ENCODE measurements at regions of chr7 and their contacts with region 1.

Region 1: GRCh38 chr7:101138213-101138870 is 11.4 kb downstream of the SERPINE1 start:
- DNase-seq: peak; percentile 96
- H3K4me3 ChIP-seq: peak overlapping the region in 3 of 4 donors; percentile 22 to 33 (median 26)
- H3K27ac ChIP-seq: peak overlapping the region; percentile 42 to 62 (median 50)
- H3K4me1 ChIP-seq: peaks cover 7 to 14% (median 13%) of the 10 kb centered on the region in 4 donors
- H3K27me3 ChIP-seq: peaks cover 0 to 10% (median 0%) of the 10 kb centered on the region in 4 donors
- CTCF ChIP-seq: peak; percentile 81 to 88 (median 86)
- EP300 ChIP-seq: no peak
- POLR2A ChIP-seq: no peak

Region 2: GRCh38 chr7:101094416-101095375 is 43.6 kb before region 1 on chr7:
- intact Hi-C with region 1: loop called (anchors 1 kb)
- DNase-seq: no peak
- H3K4me3 ChIP-seq: no peak overlapping the region
- H3K27ac ChIP-seq: no peak overlapping the region
- H3K4me1 ChIP-seq: peaks cover 12 to 33% (median 25%) of the 10 kb centered on the region in 4 donors
- H3K27me3 ChIP-seq: no peaks in the 10 kb centered on the region
- CTCF ChIP-seq: peak; percentile 59 to 72 (median 66)
- EP300 ChIP-seq: no peak
- POLR2A ChIP-seq: no peak

Region 3: DNA sequence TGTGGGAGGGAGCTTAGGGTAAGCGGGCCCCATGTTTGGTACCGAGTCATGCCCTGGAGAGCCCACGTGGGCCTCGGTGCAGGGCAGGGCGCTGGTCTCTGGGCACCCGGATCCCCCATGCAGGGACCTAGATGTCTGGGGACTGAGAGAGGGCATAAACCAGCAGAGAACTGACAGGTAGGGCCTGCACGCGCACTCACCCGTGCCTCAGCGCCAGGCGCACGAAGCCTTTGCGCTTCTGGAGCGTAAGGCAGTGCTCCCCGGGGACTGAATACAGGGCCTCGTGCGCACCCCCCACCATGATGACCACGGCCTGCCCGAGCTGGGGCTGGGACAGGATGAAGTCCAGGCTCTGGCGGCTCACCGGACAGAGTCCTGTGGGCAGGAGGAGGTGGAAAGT is 59.6 kb after region 1 on chr7:
- intact Hi-C with region 1: loop called (anchors 10 kb)
- DNase-seq: no peak
- H3K4me3 ChIP-seq: no peak overlapping the region
- H3K27ac ChIP-seq: no peak overlapping the region
- H3K4me1 ChIP-seq: peaks cover 8 to 12% (median 11%) of the 10 kb centered on the region in 4 donors
- H3K27me3 ChIP-seq: peaks cover 6 to 93% (median 31%) of the 10 kb centered on the region in 4 donors
- CTCF ChIP-seq: no peak
- EP300 ChIP-seq: no peak
- POLR2A ChIP-seq: no peak

Region 4: GRCh38 chr7:101287032-101287431 is 148.7 kb after region 1 on chr7:
- intact Hi-C with region 1: loop called (anchors 5 kb)
- DNase-seq: no peak
- H3K4me3 ChIP-seq: no peak overlapping the region
- H3K27ac ChIP-seq: no peak overlapping the region
- H3K4me1 ChIP-seq: peaks cover 0 to 10% (median 8%) of the 10 kb centered on the region in 4 donors
- H3K27me3 ChIP-seq: peaks cover 0 to 29% (median 7%) of the 10 kb centered on the region in 4 donors
- CTCF ChIP-seq: no peak
- EP300 ChIP-seq: no peak
- POLR2A ChIP-seq: no peak

Measured in esophagus muscularis mucosa (tissue), 4 donors.